Psoas muscle (tissue), 8 donors: ENCODE measurements at regions of chr6 and their contacts with region 1.

Region 1: DNA sequence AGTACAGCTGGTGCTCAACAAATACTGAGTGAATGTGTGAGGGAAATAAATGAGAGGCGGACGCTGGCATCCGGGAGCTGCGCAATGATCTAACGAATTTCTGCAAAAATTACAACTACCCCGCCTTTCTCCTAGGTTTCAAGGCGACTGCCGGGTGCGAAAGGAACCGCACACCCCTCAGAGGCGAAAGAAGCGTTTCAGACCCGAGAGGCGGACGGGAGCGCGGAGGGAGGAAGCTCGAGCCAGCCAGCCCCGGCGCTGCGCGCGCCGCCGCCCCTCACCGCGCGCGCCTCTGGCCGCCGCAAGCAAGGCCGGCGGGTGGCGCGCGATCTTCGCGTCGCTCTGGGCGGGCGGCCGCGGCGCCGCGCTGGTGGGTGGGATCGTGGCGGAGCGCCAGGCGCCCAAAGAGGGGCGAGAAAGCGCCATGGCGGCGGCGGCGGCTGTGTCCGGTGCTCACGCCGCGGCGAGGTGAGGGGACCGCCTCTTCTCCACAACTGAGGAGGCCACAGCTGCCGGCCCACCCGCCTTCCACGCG is at the start of gene BLTP3A:
- DNase-seq: peak; percentile 81 to 88
- ATAC-seq: peak; percentile 94 to 96 (median 95)
- H3K4me3 ChIP-seq: peak within 1 kb of the TSS; percentile 100
- H3K27ac ChIP-seq: peak within 1 kb of the TSS; percentile 99
- H3K4me1 ChIP-seq: peaks cover 8% of the 10 kb centered on the region
- H3K27me3 ChIP-seq: no peaks in the 10 kb centered on the region
- CTCF ChIP-seq: no peak
- total RNA-seq, gene BLTP3A: 16.5 to 34.7 (median 20.8) TPM

Region 2: GRCh38 chr6:34864007-34864406 is 72.2 kb after region 1 on chr6:
- intact Hi-C with region 1: loop called in 1 of 2 experiments (anchors 5 kb)
- DNase-seq: no peak
- ATAC-seq: peak; percentile 32 to 60 (median 57)
- H3K4me3 ChIP-seq: no peak overlapping the region
- H3K27ac ChIP-seq: peak overlapping the region; percentile 78
- H3K4me1 ChIP-seq: peaks cover 24% of the 10 kb centered on the region
- H3K27me3 ChIP-seq: no peaks in the 10 kb centered on the region
- CTCF ChIP-seq: no peak

Region 3: GRCh38 chr6:34887753-34888513 is 96.2 kb after region 1 on chr6 and contains the start of gene TAF11:
- intact Hi-C with region 1: loop called in 1 of 2 experiments (anchors 2 kb)
- DNase-seq: peak; percentile 94 to 96
- ATAC-seq: peak; percentile 94 to 96 (median 94)
- H3K4me3 ChIP-seq: peak within 1 kb of the TSS; percentile 79
- H3K27ac ChIP-seq: peak within 1 kb of the TSS; percentile 92
- H3K4me1 ChIP-seq: peaks cover 15% of the 10 kb centered on the region
- H3K27me3 ChIP-seq: no peaks in the 10 kb centered on the region
- CTCF ChIP-seq: no peak
- total RNA-seq, gene TAF11: 17.4 to 25.8 (median 23.1) TPM

Region 4: GRCh38 chr6:35259194-35259947 is 467.6 kb after region 1 on chr6 and contains the start of gene ZNF76:
- intact Hi-C with region 1: loop called in 1 of 2 experiments (anchors 10 kb)
- DNase-seq: peak; percentile 99
- ATAC-seq: peak; percentile 93 to 97 (median 96)
- H3K4me3 ChIP-seq: peak within 1 kb of the TSS; percentile 95
- H3K27ac ChIP-seq: peak within 1 kb of the TSS; percentile 99
- H3K4me1 ChIP-seq: peaks cover 41% of the 10 kb centered on the region
- H3K27me3 ChIP-seq: no peaks in the 10 kb centered on the region
- CTCF ChIP-seq: no peak
- total RNA-seq, gene ZNF76: 17.9 to 25.0 (median 22.5) TPM